Right ventricle myocardium superior (tissue), 1 donor: ENCODE measurements at regions of chr12 and their contacts with region 1.

Region 1: DNA sequence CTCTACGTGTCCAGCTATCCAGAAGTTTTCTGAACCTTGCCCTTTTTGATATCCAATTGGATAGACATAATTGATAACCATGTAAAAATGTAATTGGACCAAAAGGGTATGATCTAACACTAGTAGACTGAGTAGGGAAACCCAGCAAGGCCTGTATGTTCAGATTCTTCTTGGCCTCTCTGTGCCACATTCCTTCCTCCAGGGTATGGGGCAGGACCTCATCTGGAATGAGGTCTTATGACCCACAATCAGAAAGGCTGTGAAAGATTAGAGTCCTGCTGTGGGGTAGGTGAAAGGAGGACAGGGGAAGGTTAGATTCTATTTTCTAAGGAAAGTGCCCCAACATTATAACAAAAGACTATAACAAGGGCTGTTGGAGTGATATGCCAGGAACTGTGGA is 51.3 kb upstream of the A2ML1 start:
- DNase-seq: no peak
- ATAC-seq: no peak

Region 2: GRCh38 chr12:8088574-8088973 is 682.5 kb before region 1 on chr12:
- intact Hi-C with region 1: no loop called
- DNase-seq: no peak
- ATAC-seq: no peak

Region 3: DNA sequence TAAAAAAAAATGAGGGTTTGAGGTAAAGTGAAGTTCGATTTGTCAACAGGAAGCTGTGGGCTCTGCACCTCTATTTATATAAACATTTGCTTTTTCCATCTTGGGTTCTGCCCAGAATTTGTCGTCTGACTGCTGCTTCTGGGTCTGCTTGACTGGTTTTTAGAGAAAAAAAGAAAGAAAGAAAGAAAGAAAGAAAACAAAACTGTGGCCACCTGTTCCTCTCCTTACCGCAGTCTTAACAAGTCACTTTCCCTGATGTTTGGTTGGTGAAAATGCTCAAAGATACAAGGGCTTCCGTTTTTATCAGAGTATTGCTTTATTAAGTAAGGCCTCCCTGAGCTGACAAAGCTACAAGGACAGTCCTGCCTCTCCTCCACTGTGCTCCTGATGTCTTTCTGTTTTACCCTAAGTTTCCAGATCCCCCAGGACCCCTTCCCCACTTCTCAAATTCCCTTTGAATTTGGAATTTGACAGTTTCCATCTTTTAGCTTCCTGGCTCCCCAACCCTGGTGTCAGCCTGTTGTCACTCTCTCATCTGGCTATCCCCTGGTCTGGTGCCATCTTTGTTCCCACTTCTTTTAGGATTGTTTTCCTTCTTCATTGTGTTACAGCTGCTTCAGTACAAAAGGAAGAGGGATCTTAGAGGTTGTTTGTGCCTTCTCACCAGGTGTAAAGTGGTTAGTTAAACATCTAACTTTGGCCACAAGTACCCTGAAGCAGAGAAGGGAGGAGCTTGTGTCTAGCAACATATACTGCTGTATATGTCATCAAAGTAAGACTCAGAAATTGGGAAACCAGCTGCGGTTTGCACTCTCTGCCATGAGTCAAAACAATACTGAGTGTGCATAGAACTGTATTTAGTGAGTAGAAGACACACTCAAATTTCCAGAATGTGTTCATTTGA is 126.5 kb before region 1 on chr12:
- intact Hi-C with region 1: no loop called
- DNase-seq: no peak
- ATAC-seq: no peak

Region 4: DNA sequence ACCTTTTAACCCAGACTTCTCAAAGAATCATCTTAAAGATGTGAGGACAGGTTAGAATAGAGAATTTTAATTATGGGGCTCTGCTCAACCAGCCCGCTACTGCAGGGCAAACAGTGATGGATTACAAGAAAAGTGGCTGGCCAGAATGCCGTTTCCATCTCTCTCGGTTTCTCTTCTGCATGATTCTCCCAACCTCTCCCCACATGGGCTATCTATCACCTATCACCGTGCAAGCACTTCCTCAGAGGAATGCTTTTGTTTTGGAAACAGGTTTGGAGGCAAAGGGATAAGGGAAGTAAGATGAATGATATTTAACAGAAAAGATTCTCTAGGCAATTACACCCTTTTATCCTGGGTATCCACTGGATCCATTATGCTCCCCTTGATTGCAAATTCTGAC is 105.8 kb after region 1 on chr12:
- intact Hi-C with region 1: no loop called
- DNase-seq: no peak
- ATAC-seq: no peak

Region 5: GRCh38 chr12:8890313-8891085 is 119.4 kb after region 1 on chr12:
- intact Hi-C with region 1: loop called (anchors 10 kb)
- DNase-seq: no peak
- ATAC-seq: peak; percentile 91

Region 6: DNA sequence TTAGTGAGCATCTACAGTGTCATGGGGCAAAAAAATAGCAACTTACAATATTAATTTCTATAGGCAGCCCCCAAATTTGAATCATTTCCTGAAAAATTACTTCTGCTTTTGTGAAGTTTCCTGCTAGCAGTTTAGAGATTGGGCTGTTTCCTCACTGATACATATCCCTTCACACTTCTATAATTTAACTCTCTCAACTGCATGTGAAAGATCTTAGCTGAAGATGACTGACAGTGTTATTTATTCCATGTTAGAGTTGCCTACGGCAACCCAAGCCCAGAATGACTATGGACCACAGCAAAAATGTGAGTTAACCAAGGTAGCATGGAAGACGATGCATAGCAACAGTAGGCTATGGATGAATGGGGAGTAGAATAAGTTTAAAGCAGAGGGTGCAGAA is 218.3 kb after region 1 on chr12 and contains the start of gene KLRG1:
- intact Hi-C with region 1: no loop called
- DNase-seq: no peak
- ATAC-seq: no peak
- total RNA-seq, gene KLRG1: 4.8 TPM